ENCODE measurements at regions of chr22 and their contacts with region 1.

Region 1: GRCh38 chr22:30634471-30635233 is 929 bp upstream of the SLC35E4 start:
- DNase-seq: peak; percentile 92
- H3K4me3 ChIP-seq: peak overlapping the region; percentile 79
- H3K27ac ChIP-seq: peak overlapping the region; percentile 72
- H3K4me1 ChIP-seq: peaks cover 23% of the 10 kb centered on the region
- H3K27me3 ChIP-seq: no peaks in the 10 kb centered on the region

Region 2: GRCh38 chr22:30253205-30253852 is 381.3 kb before region 1 on chr22:
- in situ Hi-C with region 1: no loop called
- DNase-seq: peak; percentile 37
- H3K4me3 ChIP-seq: no peak overlapping the region
- H3K27ac ChIP-seq: no peak overlapping the region
- H3K4me1 ChIP-seq: peaks cover 20% of the 10 kb centered on the region
- H3K27me3 ChIP-seq: no peaks in the 10 kb centered on the region

Region 3: DNA sequence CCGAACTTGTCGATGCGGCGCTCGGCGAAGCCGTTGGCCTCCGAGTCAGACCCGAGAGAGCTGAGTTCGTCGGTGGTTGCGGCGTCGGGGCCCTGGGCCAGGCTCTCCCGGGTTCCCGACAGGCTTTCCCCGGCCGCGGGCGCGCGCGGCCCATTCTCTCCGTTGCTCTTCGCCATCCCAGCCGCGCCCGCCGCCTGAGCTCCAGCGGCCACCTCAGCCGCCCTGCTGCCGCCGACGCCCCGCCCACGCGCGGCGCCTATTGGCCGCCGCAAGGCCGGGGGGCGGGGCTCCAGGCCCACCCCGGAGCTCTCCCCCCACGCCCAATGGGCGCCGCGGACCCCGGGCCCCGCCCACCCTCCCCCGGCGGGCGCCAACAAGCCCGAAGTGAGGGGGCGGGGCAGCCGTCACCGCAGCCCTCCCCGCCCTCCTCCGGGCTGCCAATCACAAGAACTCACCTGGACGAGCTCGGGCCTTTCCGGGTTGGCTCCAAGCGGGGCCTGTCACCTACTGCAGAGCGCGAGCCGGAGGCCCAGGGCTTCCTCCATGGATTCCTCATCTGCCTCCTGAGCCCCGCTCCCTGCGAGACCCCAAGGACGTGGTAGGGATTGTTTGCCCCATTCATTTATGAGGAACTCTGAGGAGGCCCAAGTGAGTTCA is 307.8 kb before region 1 on chr22 and contains the start of gene TBC1D10A:
- in situ Hi-C with region 1: no loop called
- DNase-seq: peak; percentile 97
- H3K4me3 ChIP-seq: peak within 1 kb of the TSS; percentile 79
- H3K27ac ChIP-seq: peak within 1 kb of the TSS; percentile 79
- H3K4me1 ChIP-seq: peaks cover 18% of the 10 kb centered on the region
- H3K27me3 ChIP-seq: no peaks in the 10 kb centered on the region
- total RNA-seq, gene TBC1D10A: 16.9 and 26.3 TPM in 2 replicates

Region 4: DNA sequence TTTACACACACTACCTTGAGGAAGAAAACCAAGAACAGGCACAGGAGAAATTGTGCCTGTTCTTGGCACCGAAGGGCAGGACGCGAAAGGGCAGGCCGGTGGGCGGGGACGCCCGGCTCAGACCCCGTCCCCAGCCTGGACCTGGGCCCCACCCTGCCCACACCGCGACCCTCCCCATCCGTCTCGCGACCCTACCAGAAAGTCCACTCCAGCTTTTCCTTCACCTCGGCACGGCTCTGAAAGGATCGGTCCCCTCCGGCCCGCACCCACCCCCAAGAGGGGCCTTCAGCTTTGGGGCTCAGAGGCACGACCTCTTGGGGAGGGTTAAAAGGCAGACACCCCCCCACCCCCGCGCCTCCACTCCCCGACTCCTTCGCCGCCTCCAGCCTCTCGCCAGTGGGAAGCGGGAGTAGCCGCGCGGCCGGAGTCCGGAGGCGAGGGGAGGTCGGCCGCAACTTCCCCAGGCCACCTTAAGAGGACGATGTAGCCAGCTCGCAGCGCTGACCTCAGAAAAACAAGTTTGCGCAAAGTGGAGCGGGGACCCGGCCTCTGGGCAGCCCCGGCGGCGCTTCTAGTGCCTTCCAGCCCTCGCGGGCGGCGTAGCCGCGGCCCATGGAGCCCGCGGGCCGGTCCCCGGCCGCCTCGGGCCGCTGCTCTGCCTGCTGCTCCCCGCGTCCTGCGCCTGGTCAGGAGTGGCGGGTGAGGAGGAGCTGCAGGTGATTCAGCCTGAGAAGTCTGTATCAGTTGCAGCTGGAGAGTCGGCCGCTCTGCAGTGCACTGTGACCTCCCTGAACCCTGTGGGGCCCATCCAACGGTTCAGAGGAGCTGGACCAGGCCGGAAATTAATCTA is 92.5 kb before region 1 on chr22:
- in situ Hi-C with region 1: no loop called
- DNase-seq: peak; percentile 27
- H3K4me3 ChIP-seq: peak overlapping the region; percentile 42
- H3K27ac ChIP-seq: no peak overlapping the region
- H3K4me1 ChIP-seq: no peaks in the 10 kb centered on the region
- H3K27me3 ChIP-seq: peaks cover 28% of the 10 kb centered on the region

Region 5: GRCh38 chr22:30754971-30755756 is 120.5 kb after region 1 on chr22:
- in situ Hi-C with region 1: loop called (anchors 10 kb)
- DNase-seq: peak; percentile 91
- H3K4me3 ChIP-seq: no peak overlapping the region
- H3K27ac ChIP-seq: no peak overlapping the region
- H3K4me1 ChIP-seq: no peaks in the 10 kb centered on the region
- H3K27me3 ChIP-seq: no peaks in the 10 kb centered on the region

Region 6: GRCh38 chr22:30902496-30903357 is 268.1 kb after region 1 on chr22:
- in situ Hi-C with region 1: loop called (anchors 10 kb)
- DNase-seq: no peak
- H3K4me3 ChIP-seq: no peak overlapping the region
- H3K27ac ChIP-seq: no peak overlapping the region
- H3K4me1 ChIP-seq: no peaks in the 10 kb centered on the region
- H3K27me3 ChIP-seq: no peaks in the 10 kb centered on the region

Region 7: GRCh38 chr22:30920407-30920806 is 285.8 kb after region 1 on chr22:
- in situ Hi-C with region 1: no loop called
- DNase-seq: peak; percentile 73
- H3K4me3 ChIP-seq: peak overlapping the region; percentile 61
- H3K27ac ChIP-seq: no peak overlapping the region
- H3K4me1 ChIP-seq: peaks cover 14% of the 10 kb centered on the region
- H3K27me3 ChIP-seq: no peaks in the 10 kb centered on the region

Measured in GM23248 (cell line).